HEK293 (cell line): ENCODE measurements at regions of chr16 and their contacts with region 1.

Region 1: DNA sequence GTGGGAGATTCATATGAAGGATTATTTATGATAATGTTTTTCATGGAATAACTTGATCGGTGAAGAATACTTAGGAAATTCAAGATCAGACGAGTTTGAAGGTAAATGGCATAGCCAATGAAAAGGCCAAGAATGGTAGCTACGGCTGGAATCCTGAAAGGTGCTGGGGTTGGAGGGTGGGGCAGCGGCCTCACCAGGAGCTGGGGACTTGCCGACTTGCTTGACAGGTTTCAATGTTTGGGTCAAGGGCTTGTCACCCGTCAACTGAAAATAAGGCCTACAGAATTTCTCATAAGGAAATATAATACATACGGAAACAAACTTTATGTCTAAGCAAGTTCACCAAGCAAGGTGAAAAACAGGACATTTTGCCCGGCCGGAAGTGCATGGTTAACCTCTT is 9.9 kb downstream of the CRYM start:
- H3K4me3 ChIP-seq: no peak overlapping the region
- H3K27ac ChIP-seq: no peak overlapping the region
- H3K4me1 ChIP-seq: peaks cover 3% of the 10 kb centered on the region; the same call in 1 of the 2 replicates
- CTCF ChIP-seq: no peak

Region 2: DNA sequence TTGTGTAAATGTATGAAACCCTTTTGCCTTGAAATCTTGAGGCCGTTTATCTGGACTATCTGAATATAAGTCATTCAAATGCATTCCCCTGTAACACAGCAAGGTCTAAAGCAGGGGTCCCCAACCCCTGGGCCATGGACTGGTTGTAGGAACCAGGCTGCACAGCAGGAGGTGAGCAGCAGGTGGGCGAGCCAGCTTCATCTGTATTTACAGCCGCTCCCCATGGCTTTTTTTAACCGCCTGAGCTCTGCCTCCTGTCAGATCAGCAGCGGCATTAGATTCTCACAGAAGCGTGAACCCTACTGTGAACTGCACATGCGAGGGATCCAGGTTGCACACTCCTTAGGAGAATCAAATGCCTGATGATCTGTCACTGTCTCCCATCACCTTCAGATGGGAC is 141.7 kb before region 1 on chr16:
- CTCF ChIA-PET with region 1: no interaction called
- POLR2A ChIA-PET with region 1: no interaction called
- H3K4me3 ChIP-seq: no peak overlapping the region
- H3K27ac ChIP-seq: no peak overlapping the region
- H3K4me1 ChIP-seq: no peaks in the 10 kb centered on the region
- CTCF ChIP-seq: no peak

Region 3: GRCh38 chr16:21150375-21151001 is 117.7 kb before region 1 on chr16 and contains the start of gene DNAH3:
- CTCF ChIA-PET with region 1: no interaction called
- POLR2A ChIA-PET with region 1: interaction called, 10 read pairs
- H3K4me3 ChIP-seq: no peak within 1 kb of the TSS
- H3K27ac ChIP-seq: no peak within 1 kb of the TSS
- H3K4me1 ChIP-seq: no peaks in the 10 kb centered on the region
- CTCF ChIP-seq: no peak